H1 (cell line): ENCODE measurements at regions of chr17 and their contacts with region 1.

Region 1: GRCh38 chr17:8376271-8377067 is at the start of gene KRABD2:
- DNase-seq: peak; percentile 82 to 95
- H3K4me3 ChIP-seq: peak within 1 kb of the TSS; percentile 48 to 84 (median 72)
- H3K27ac ChIP-seq: peak within 1 kb of the TSS; percentile 86
- H3K4me1 ChIP-seq: peaks cover 0 to 15% (median 2%) of the 10 kb centered on the region in 4 experiments; a peak in 4 of 7 replicates
- H3K27me3 ChIP-seq: no peaks in the 10 kb centered on the region
- CTCF ChIP-seq: peak; percentile 68 to 73 (median 72)
- EP300 ChIP-seq: peak in 1 of 2 experiments; percentile 66; a peak in 1 of 3 replicates
- POLR2A ChIP-seq: peak; percentile 93 to 94
- RAD21 ChIP-seq: peak; percentile 13 to 32; a peak in 3 of 4 replicates

Region 2: DNA sequence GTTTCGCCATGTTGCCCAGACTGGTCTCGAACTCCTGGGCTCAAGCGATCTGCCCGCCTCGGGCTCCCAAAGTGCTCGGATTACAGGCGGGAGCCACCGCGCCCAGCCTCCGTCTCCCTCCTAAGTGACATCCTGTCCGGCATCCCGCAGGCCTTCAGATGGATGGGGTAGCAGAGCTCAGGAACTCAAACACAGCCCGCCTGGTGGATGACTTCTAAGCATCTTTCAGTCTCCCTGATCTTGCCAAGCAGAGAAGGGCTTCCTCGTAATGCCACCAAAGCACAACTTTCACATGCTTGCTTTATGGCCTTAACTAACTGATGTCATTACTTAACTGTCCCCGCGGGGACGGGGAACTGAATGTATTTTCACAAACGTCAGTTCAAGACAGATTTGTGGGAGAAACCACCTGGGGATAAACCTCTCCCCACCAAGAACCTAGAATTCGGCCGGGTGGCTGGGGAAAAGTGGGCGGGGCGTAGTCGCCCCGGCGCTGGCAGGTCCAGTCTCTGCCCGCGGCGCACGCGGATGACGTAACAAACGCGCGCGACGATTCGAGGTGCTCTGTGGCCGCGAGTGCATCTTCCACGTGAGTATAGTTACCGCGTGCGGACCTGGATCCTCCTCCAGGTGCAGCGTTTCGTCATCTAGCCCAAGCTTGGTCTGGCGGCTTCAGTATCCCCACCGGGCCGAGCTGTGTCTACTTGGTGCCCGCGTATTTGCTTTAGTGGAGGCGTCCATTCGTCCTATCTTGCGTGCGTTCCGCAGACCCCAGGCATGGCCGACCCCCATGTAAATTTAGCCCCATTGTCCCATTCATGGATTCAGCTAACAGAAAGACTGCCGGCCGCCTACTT is 127.5 kb before region 1 on chr17 and contains the start of gene PFAS:
- CTCF ChIA-PET with region 1: no interaction called
- POLR2A ChIA-PET with region 1: interaction called, 22 read pairs
- DNase-seq: peak; percentile 77 to 99
- H3K4me3 ChIP-seq: peak within 1 kb of the TSS; percentile 93 to 99 (median 96)
- H3K27ac ChIP-seq: peak within 1 kb of the TSS; percentile 94
- H3K4me1 ChIP-seq: peaks cover 0 to 6% (median 3%) of the 10 kb centered on the region in 4 experiments; a peak in 5 of 7 replicates
- H3K27me3 ChIP-seq: no peaks in the 10 kb centered on the region
- CTCF ChIP-seq: no peak
- EP300 ChIP-seq: no peak
- POLR2A ChIP-seq: peak; percentile 71 to 94
- RAD21 ChIP-seq: no peak
- total RNA-seq, gene PFAS: 238 and 248 TPM in 2 replicates

Region 3: GRCh38 chr17:8314797-8315763 is 61.4 kb before region 1 on chr17:
- CTCF ChIA-PET with region 1: interaction called, 3 read pairs
- POLR2A ChIA-PET with region 1: interaction called, 19 read pairs
- DNase-seq: no peak
- H3K4me3 ChIP-seq: peak overlapping the region; percentile 46 to 79 (median 66)
- H3K27ac ChIP-seq: no peak overlapping the region
- H3K4me1 ChIP-seq: peaks cover 0 to 16% (median 6%) of the 10 kb centered on the region in 4 experiments; a peak in 5 of 7 replicates
- H3K27me3 ChIP-seq: peaks cover 3 to 28% (median 23%) of the 10 kb centered on the region in 4 experiments
- CTCF ChIP-seq: no peak
- EP300 ChIP-seq: no peak
- POLR2A ChIP-seq: no peak
- RAD21 ChIP-seq: no peak

Region 4: GRCh38 chr17:8337802-8338752 is 38.4 kb before region 1 on chr17:
- CTCF ChIA-PET with region 1: interaction called, 12 read pairs
- POLR2A ChIA-PET with region 1: interaction called, 66 read pairs
- DNase-seq: no peak
- H3K4me3 ChIP-seq: no peak overlapping the region
- H3K27ac ChIP-seq: no peak overlapping the region
- H3K4me1 ChIP-seq: peaks cover 2 to 10% (median 5%) of the 10 kb centered on the region in 4 experiments; a peak in 6 of 7 replicates
- H3K27me3 ChIP-seq: no peaks in the 10 kb centered on the region
- CTCF ChIP-seq: no peak
- EP300 ChIP-seq: no peak
- POLR2A ChIP-seq: no peak
- RAD21 ChIP-seq: no peak

Region 5: GRCh38 chr17:8354236-8354635 is 22.2 kb before region 1 on chr17:
- CTCF ChIA-PET with region 1: interaction called, 3 read pairs
- POLR2A ChIA-PET with region 1: interaction called, 36 read pairs
- DNase-seq: no peak
- H3K4me3 ChIP-seq: no peak overlapping the region
- H3K27ac ChIP-seq: no peak overlapping the region
- H3K4me1 ChIP-seq: peaks cover 0 to 3% (median 0%) of the 10 kb centered on the region in 4 experiments; a peak in 1 of 7 replicates
- H3K27me3 ChIP-seq: no peaks in the 10 kb centered on the region
- CTCF ChIP-seq: no peak
- EP300 ChIP-seq: no peak
- POLR2A ChIP-seq: no peak
- RAD21 ChIP-seq: no peak

Region 6: DNA sequence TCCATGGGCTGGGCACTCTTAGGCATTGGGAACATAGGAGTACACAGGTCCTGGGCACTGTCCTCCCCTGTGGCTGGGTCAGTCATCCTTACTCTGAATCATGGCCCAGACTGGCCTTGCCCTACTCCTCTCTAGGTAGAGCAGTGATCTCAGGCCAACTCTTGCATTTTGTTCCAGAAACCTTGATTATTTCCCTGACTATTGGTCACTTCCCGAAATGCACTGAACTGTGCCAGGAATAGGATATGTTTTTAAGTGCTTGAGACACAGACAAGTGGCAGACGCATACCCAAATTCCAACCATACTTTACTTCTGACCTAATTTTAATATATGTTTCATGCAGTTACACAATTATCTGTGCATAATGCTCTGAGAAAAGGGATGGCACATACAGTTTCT is 10.2 kb before region 1 on chr17:
- CTCF ChIA-PET with region 1: interaction called, 8 read pairs
- POLR2A ChIA-PET with region 1: interaction called, 36 read pairs
- DNase-seq: no peak
- H3K4me3 ChIP-seq: no peak overlapping the region
- H3K27ac ChIP-seq: no peak overlapping the region
- H3K4me1 ChIP-seq: no peaks in the 10 kb centered on the region
- H3K27me3 ChIP-seq: no peaks in the 10 kb centered on the region
- CTCF ChIP-seq: no peak
- EP300 ChIP-seq: no peak
- POLR2A ChIP-seq: no peak
- RAD21 ChIP-seq: no peak

Region 7: DNA sequence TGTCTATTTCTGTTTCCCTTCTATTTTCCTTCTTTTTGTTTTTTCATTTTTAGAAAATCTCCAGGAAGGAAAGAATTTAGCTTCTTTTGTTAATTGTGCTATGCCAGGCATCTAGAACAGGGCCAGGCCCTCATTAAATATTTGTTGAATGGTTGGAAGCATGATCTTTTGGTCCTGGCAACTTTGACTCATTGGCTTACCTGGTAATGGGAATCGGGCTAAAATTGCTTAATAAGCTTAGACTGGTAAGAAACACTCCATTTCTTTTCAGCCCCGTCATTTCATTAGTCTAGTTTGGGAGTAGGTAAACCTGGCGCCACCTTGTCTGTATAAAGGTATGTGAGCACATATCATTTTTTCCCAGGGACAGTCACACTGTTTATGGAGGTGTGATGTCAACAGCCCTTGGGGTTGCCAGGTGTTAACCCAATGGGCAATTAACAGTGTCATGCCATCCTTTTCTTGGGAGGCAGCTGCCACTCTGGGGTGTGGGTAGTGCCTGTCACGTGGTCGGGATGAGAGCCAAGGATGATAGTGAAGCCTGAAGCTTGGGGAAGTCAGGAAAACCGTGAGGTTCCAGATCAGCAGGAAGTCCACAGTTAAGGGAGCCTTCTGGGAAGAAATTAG is 49.7 kb after region 1 on chr17:
- CTCF ChIA-PET with region 1: no interaction called
- POLR2A ChIA-PET with region 1: no interaction called
- DNase-seq: no peak
- H3K4me3 ChIP-seq: no peak overlapping the region
- H3K27ac ChIP-seq: no peak overlapping the region
- H3K4me1 ChIP-seq: no peaks in the 10 kb centered on the region
- H3K27me3 ChIP-seq: no peaks in the 10 kb centered on the region
- CTCF ChIP-seq: no peak
- EP300 ChIP-seq: no peak
- POLR2A ChIP-seq: no peak
- RAD21 ChIP-seq: no peak